Gastrocnemius medialis (tissue), 4 donors: ENCODE measurements at regions of chr1 and their contacts with region 1.

Region 1: DNA sequence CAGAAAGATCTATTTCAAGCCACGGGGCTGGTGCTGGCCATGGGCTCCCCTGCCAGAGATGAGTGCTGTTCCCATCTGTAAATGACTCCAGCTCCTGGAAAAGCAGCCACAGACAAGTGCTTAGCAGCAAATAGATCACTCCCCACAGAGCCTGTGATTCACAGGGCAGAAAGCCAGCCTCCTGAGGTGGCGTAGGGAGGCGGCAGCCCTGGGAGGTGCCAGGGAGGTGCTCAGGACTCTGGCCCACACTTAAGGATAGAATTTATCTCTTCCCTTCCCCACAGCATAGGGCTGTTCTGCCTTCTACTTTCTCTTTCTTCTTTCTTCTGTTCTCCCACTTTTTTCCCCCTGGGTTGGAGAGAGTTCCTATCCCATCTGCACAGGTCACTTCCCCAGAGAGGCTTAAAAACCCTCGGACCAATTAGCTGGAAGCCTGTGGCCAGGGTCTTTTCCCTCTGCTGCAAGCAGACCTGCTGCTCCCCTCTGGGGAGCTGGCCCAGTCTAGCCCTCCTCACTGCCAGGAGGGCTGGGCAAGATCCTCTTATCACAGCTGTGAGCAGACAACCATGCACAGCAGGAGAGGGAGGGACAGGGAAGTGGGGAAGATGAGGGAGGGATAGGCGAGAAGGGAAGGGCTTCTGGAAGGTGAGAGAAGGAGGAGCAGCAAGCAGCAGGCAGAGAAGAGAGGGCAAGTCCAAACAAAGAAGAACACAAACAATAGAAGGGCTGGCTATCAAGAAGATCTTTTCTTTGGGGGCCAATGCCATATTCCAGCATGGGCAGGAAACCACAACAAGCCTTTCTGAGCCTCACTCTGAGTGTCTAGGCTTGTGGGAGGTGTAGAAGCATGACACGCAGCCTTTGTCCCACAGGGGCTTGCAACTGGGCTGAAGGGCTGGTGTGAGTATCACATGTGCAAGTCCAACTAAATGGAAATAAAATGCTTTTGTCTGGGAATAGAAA is 41.0 kb downstream of the KCND3 start:
- DNase-seq: peak; percentile 90
- ATAC-seq: peak; percentile 83 to 97
- H3K4me3 ChIP-seq: peak overlapping the region in 2 of 4 donors; percentile 16 to 25
- H3K27ac ChIP-seq: peak overlapping the region; percentile 84 to 92 (median 90)
- H3K4me1 ChIP-seq: peaks cover 47 to 59% of the 10 kb centered on the region in 2 donors
- H3K27me3 ChIP-seq: no peaks in the 10 kb centered on the region
- CTCF ChIP-seq: no peak
- POLR2A ChIP-seq: no peak

Region 2: DNA sequence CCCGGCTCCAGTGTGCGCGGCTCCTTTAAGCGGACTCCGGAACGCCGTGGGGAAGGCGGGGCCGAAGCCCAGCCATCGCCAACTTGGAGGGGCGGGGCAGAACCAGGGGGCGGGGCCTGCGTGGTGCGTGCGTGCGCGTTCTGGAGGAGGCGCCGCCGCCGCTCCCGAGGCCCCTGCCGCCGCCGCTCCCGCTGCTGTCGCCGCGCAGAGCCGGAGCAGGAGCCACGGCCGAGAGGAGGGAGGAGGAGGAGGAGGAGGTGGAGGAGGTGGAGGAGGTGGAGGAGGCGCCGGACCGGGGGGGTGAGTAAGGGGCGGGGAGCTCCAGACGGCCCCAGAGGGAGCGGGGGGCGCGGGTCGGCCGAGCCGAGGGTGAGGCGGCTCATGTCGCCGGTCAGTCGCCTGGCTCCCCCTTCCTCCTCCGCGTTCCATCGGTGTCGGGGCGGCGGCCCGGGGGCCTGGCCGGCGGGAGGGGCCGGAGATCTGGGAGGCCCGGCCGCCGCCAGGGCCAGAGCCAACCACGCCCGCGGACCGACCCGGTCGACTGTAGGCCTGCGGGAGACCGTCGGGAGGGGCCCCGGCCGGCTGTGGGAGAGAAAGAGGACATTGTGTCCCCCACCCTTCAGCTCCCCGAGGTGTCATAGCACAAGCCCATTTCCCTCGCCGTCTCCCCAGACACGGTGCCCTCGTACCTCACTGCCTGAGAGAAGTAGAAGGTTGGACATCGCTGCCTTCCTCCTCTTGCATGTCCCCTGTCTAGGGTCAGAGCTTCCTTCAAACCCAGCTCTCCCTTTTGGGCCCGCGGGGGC is 328.7 kb before region 1 on chr1 and contains the start of gene RAP1A:
- in situ Hi-C with region 1: no loop called
- intact Hi-C with region 1: no loop called
- DNase-seq: peak; percentile 91 to 94
- ATAC-seq: peak; percentile 88 to 90
- H3K4me3 ChIP-seq: peak within 1 kb of the TSS; percentile 59 to 91 (median 72)
- H3K27ac ChIP-seq: peak within 1 kb of the TSS; percentile 94 to 98 (median 97)
- H3K4me1 ChIP-seq: peaks cover 36 to 48% of the 10 kb centered on the region in 2 donors
- H3K27me3 ChIP-seq: no peaks in the 10 kb centered on the region
- CTCF ChIP-seq: peak in 1 of 5 experiments; percentile 18
- POLR2A ChIP-seq: peak; percentile 82 to 86
- total RNA-seq, gene RAP1A: 49.4 to 72.1 (median 57.9) TPM

Region 3: GRCh38 chr1:111920221-111921024 is 28.1 kb before region 1 on chr1:
- in situ Hi-C with region 1: no loop called
- intact Hi-C with region 1: loop called (anchors 2 kb)
- DNase-seq: peak; percentile 54 to 55
- ATAC-seq: peak; percentile 96 to 99
- H3K4me3 ChIP-seq: peak overlapping the region in 2 of 4 donors; percentile 3 to 31
- H3K27ac ChIP-seq: peak overlapping the region; percentile 77 to 87 (median 82)
- H3K4me1 ChIP-seq: peaks cover 17 to 23% of the 10 kb centered on the region in 2 donors
- H3K27me3 ChIP-seq: no peaks in the 10 kb centered on the region
- CTCF ChIP-seq: no peak
- POLR2A ChIP-seq: no peak

Region 4: GRCh38 chr1:112674439-112674985 is 726.0 kb after region 1 on chr1 and contains the start of gene MOV10:
- in situ Hi-C with region 1: no loop called
- intact Hi-C with region 1: no loop called
- DNase-seq: peak; percentile 9 to 58
- ATAC-seq: peak; percentile 64 to 72
- H3K4me3 ChIP-seq: peak within 1 kb of the TSS; percentile 62 to 89 (median 78)
- H3K27ac ChIP-seq: peak within 1 kb of the TSS; percentile 75 to 84 (median 80)
- H3K4me1 ChIP-seq: peaks cover 14 to 18% of the 10 kb centered on the region in 2 donors
- H3K27me3 ChIP-seq: no peaks in the 10 kb centered on the region
- CTCF ChIP-seq: no peak
- POLR2A ChIP-seq: no peak
- total RNA-seq, gene MOV10: 2.8 to 7.2 (median 4.8) TPM